H1 (cell line): ENCODE measurements at regions of chr9 and their contacts with region 1.

Region 1: DNA sequence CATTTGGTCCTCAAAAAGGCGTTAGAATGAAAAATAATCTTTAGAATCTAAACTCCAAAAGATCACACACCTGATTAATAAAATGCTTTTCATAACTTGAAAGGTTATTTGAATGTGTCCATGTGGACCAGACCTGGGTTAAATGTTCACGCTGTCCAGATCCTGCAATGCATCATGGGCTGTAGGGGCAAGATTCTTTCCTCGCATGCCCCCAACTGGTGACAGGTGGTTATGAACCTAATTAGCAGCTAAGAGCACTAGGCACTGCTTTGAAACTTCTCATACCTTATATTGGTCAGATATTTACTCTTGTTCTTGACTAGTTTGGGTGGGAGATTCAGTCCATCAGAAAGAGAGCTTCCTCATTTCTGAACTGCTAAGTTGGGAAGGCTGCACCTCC is 19.3 kb upstream of the PIP5K1B start:
- DNase-seq: peak in 1 of 2 experiments; percentile 57
- H3K4me3 ChIP-seq: no peak overlapping the region
- H3K27ac ChIP-seq: no peak overlapping the region
- H3K4me1 ChIP-seq: 0 out of 7 replicates have a peak, but pooled peaks cover 0 to 2% (median 0%) of the 10 kb centered on the region in 4 experiments
- H3K27me3 ChIP-seq: no peaks in the 10 kb centered on the region
- CTCF ChIP-seq: peak; percentile 45 to 74 (median 55)
- EP300 ChIP-seq: no peak
- POLR2A ChIP-seq: no peak
- RAD21 ChIP-seq: peak; percentile 48 to 66

Region 2: GRCh38 chr9:68672215-68672614 is 13.6 kb before region 1 on chr9:
- CTCF ChIA-PET with region 1: interaction called, 53 read pairs
- POLR2A ChIA-PET with region 1: interaction called, 3 read pairs
- DNase-seq: no peak
- H3K4me3 ChIP-seq: no peak overlapping the region
- H3K27ac ChIP-seq: no peak overlapping the region
- H3K4me1 ChIP-seq: peaks cover 0 to 16% (median 6%) of the 10 kb centered on the region in 4 experiments
- H3K27me3 ChIP-seq: no peaks in the 10 kb centered on the region; a peak in 1 of 7 replicates
- CTCF ChIP-seq: no peak
- EP300 ChIP-seq: no peak
- POLR2A ChIP-seq: no peak
- RAD21 ChIP-seq: no peak

Region 3: GRCh38 chr9:68698943-68699509 is 13.3 kb after region 1 on chr9:
- CTCF ChIA-PET with region 1: interaction called, 13 read pairs
- POLR2A ChIA-PET with region 1: no interaction called
- DNase-seq: no peak
- H3K4me3 ChIP-seq: no peak overlapping the region
- H3K27ac ChIP-seq: no peak overlapping the region
- H3K4me1 ChIP-seq: peaks cover 0 to under 1% (median 0%) of the 10 kb centered on the region in 4 experiments; a peak in 3 of 7 replicates
- H3K27me3 ChIP-seq: peaks cover 0 to 10% (median 8%) of the 10 kb centered on the region in 4 experiments; a peak in 5 of 7 replicates
- CTCF ChIP-seq: no peak
- EP300 ChIP-seq: no peak
- POLR2A ChIP-seq: no peak
- RAD21 ChIP-seq: no peak